K562 (cell line): ENCODE measurements at regions of chrX and their contacts with region 1.

Region 1: GRCh38 chrX:152343306-152343705 is 107.8 kb downstream of the GABRA3 start:
- DNase-seq: peak in 3 of 4 experiments; percentile 4 to 20 (median 17)
- ATAC-seq: peak; percentile 72
- H3K4me3 ChIP-seq: no peak overlapping the region
- H3K27ac ChIP-seq: no peak overlapping the region
- H3K4me1 ChIP-seq: no peaks in the 10 kb centered on the region
- H3K27me3 ChIP-seq: no peaks in the 10 kb centered on the region
- CTCF ChIP-seq: peak in 2 of 3 experiments; percentile 35 to 65; a peak in 4 of 6 replicates
- EP300 ChIP-seq: no peak
- POLR2A ChIP-seq: no peak
- RAD21 ChIP-seq: peak; percentile 42 to 59

Region 2: DNA sequence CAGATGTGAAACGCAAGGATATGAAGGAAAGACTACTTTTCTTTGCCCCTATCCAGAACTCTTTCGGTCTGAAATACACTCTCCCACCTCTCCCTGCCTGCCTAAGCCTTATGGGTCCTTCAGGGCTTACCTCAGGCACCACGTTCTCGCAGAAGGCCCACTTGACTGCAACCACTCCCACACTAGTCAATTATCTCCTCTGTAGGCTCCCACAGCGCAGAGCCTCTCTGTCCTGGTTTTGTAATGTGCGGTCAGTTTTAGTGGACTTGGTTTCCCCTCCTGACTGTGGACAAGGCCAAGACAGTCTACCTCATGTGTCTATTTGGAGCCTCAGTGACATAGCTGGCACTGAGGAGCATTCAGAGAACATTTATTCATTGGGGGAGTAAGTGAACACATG is 597.7 kb before region 1 on chrX:
- CTCF ChIA-PET with region 1: no interaction called
- POLR2A ChIA-PET with region 1: no interaction called
- in situ Hi-C with region 1: loop called (anchors 5 kb)
- intact Hi-C with region 1: no loop called
- DNase-seq: no peak
- ATAC-seq: no peak
- H3K4me3 ChIP-seq: no peak overlapping the region
- H3K27ac ChIP-seq: no peak overlapping the region
- H3K4me1 ChIP-seq: no peaks in the 10 kb centered on the region
- H3K27me3 ChIP-seq: peaks cover 2 to 22% of the 10 kb centered on the region in 2 experiments; a peak in 4 of 5 replicates
- CTCF ChIP-seq: no peak
- EP300 ChIP-seq: no peak
- POLR2A ChIP-seq: no peak
- RAD21 ChIP-seq: no peak

Region 3: DNA sequence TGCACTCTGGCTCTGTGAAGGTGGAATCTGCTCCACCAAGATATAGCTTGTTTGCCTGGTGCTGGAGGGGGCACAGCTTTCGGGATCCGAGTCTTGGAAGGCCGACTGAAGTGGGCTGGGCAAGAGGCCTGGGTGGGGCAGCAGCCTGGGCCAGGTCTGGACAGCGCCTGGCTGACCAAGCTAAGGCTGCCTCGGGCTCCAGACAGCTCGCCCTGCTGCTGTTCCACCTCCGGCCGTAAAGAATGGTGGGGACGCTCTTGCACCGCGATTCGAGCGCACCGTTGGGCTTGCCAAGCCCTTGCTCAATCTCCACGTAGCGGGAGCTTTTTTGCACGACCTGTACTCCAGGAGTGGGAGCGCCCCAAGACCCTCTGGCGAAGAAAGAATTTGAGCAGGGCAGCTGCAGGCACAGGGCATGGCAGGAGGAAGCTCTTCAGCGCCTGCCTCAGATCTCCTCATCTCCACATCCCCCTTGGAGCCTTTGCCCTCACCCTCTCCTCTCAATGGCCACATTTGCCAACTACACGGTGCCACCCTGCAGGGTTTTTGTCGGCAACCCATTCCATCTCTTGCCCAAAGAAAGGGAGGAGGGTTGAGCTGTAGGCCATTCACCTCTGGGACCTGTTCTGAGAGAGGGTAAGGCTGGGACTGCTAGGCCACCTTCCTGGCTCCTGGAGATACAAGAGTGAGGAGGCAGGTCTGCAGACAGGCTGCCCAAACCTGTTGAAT is 589.8 kb before region 1 on chrX:
- CTCF ChIA-PET with region 1: interaction called, 3 read pairs
- POLR2A ChIA-PET with region 1: no interaction called
- in situ Hi-C with region 1: loop called (anchors 5 kb)
- intact Hi-C with region 1: loop called (anchors 5 kb)
- DNase-seq: peak; percentile 64 to 69 (median 66)
- ATAC-seq: peak; percentile 96
- H3K4me3 ChIP-seq: no peak overlapping the region
- H3K27ac ChIP-seq: no peak overlapping the region
- H3K4me1 ChIP-seq: peaks cover 0 to 6% of the 10 kb centered on the region in 2 experiments; a peak in 2 of 5 replicates
- H3K27me3 ChIP-seq: no peaks in the 10 kb centered on the region; a peak in 1 of 5 replicates
- CTCF ChIP-seq: peak; percentile 86 to 88 (median 86)
- EP300 ChIP-seq: no peak
- POLR2A ChIP-seq: no peak
- RAD21 ChIP-seq: peak; percentile 88 to 89

Region 4: GRCh38 chrX:151852294-151852693 is 491.0 kb before region 1 on chrX:
- CTCF ChIA-PET with region 1: no interaction called
- POLR2A ChIA-PET with region 1: no interaction called
- in situ Hi-C with region 1: no loop called
- intact Hi-C with region 1: loop called (anchors 10 kb)
- DNase-seq: peak in 2 of 4 experiments; percentile 16 to 21
- ATAC-seq: peak; percentile 41; the same call in 1 of the 3 replicates
- H3K4me3 ChIP-seq: no peak overlapping the region
- H3K27ac ChIP-seq: no peak overlapping the region
- H3K4me1 ChIP-seq: no peaks in the 10 kb centered on the region
- H3K27me3 ChIP-seq: no peaks in the 10 kb centered on the region; a peak in 1 of 5 replicates
- CTCF ChIP-seq: peak; percentile 19 to 56 (median 41); a peak in 4 of 6 replicates
- EP300 ChIP-seq: no peak
- POLR2A ChIP-seq: no peak
- RAD21 ChIP-seq: peak; percentile 52 to 73

Region 5: GRCh38 chrX:151974336-151975227 is 368.7 kb before region 1 on chrX and contains the start of gene GABRE:
- CTCF ChIA-PET with region 1: interaction called, 3 read pairs
- POLR2A ChIA-PET with region 1: interaction called, 3 read pairs
- in situ Hi-C with region 1: no loop called
- intact Hi-C with region 1: loop called (anchors 5 kb)
- DNase-seq: peak; percentile 85 to 87 (median 86)
- ATAC-seq: peak; percentile 88
- H3K4me3 ChIP-seq: peak within 1 kb of the TSS; percentile 93
- H3K27ac ChIP-seq: peak within 1 kb of the TSS; percentile 83
- H3K4me1 ChIP-seq: peaks cover 20 to 26% of the 10 kb centered on the region in 2 experiments; a peak in 4 of 5 replicates
- H3K27me3 ChIP-seq: no peaks in the 10 kb centered on the region
- CTCF ChIP-seq: no peak
- EP300 ChIP-seq: no peak
- POLR2A ChIP-seq: peak; percentile 90
- RAD21 ChIP-seq: no peak
- polyA plus RNA-seq, gene GABRE: 23.1 to 40.7 TPM

Region 6: GRCh38 chrX:152154050-152154449 is 189.3 kb before region 1 on chrX:
- CTCF ChIA-PET with region 1: no interaction called
- POLR2A ChIA-PET with region 1: no interaction called
- in situ Hi-C with region 1: no loop called
- intact Hi-C with region 1: loop called (anchors 10 kb)
- DNase-seq: peak; percentile 24 to 56 (median 34)
- ATAC-seq: peak; percentile 47
- H3K4me3 ChIP-seq: no peak overlapping the region
- H3K27ac ChIP-seq: peak overlapping the region; percentile 51
- H3K4me1 ChIP-seq: peaks cover 17 to 82% of the 10 kb centered on the region in 2 experiments
- H3K27me3 ChIP-seq: no peaks in the 10 kb centered on the region
- CTCF ChIP-seq: peak in 1 of 3 experiments; percentile 37; a peak in 2 of 6 replicates
- EP300 ChIP-seq: 0 out of 2 replicates have a peak, but pooled peaks have one; percentile 19
- POLR2A ChIP-seq: no peak
- RAD21 ChIP-seq: peak; percentile 14 to 55

Region 7: GRCh38 chrX:152465132-152465531 is 121.8 kb after region 1 on chrX:
- CTCF ChIA-PET with region 1: no interaction called
- POLR2A ChIA-PET with region 1: no interaction called
- in situ Hi-C with region 1: no loop called
- intact Hi-C with region 1: no loop called
- DNase-seq: no peak
- ATAC-seq: no peak
- H3K4me3 ChIP-seq: no peak overlapping the region
- H3K27ac ChIP-seq: no peak overlapping the region
- H3K4me1 ChIP-seq: no peaks in the 10 kb centered on the region
- H3K27me3 ChIP-seq: no peaks in the 10 kb centered on the region
- CTCF ChIP-seq: no peak
- EP300 ChIP-seq: no peak
- POLR2A ChIP-seq: no peak
- RAD21 ChIP-seq: no peak

Region 8: DNA sequence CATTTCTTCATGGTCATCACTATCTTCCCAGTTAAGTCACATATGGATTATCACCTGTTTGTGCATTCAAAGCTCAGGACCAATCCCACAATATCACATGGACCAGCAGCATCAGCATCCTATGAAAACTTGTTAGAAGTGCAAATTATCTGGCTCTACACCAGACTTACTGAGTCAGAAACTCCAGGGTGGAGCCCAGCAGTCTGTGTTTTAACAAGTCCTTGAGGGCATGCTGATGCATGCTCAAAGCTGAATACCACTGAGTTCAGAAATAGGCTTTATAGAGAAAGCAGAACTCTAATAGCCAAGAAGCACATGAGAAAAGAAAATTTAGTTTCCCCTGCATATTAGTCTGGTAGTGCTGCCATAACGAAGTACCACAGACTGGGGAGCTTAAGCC is 232.0 kb after region 1 on chrX:
- CTCF ChIA-PET with region 1: no interaction called
- POLR2A ChIA-PET with region 1: no interaction called
- in situ Hi-C with region 1: no loop called
- intact Hi-C with region 1: no loop called
- DNase-seq: no peak
- ATAC-seq: no peak
- H3K4me3 ChIP-seq: no peak overlapping the region
- H3K27ac ChIP-seq: no peak overlapping the region
- H3K4me1 ChIP-seq: no peaks in the 10 kb centered on the region
- H3K27me3 ChIP-seq: no peaks in the 10 kb centered on the region
- CTCF ChIP-seq: no peak
- EP300 ChIP-seq: no peak
- POLR2A ChIP-seq: no peak
- RAD21 ChIP-seq: no peak

Region 9: GRCh38 chrX:152632445-152633097 is 289.3 kb after region 1 on chrX:
- CTCF ChIA-PET with region 1: no interaction called
- POLR2A ChIA-PET with region 1: no interaction called
- in situ Hi-C with region 1: no loop called
- intact Hi-C with region 1: loop called (anchors 10 kb)
- DNase-seq: peak; percentile 25 to 60 (median 45)
- ATAC-seq: 0 out of 3 replicates have a peak, but pooled peaks have one; percentile 50
- H3K4me3 ChIP-seq: no peak overlapping the region
- H3K27ac ChIP-seq: no peak overlapping the region
- H3K4me1 ChIP-seq: peaks cover under 1 to 8% of the 10 kb centered on the region in 2 experiments; a peak in 4 of 5 replicates
- H3K27me3 ChIP-seq: no peaks in the 10 kb centered on the region
- CTCF ChIP-seq: peak; percentile 61 to 75 (median 72)
- EP300 ChIP-seq: no peak
- POLR2A ChIP-seq: no peak
- RAD21 ChIP-seq: peak; percentile 67 to 74